ENCODE measurements at regions of chr19 and their contacts with region 1.

Region 1: GRCh38 chr19:16041299-16041990 is 34.9 kb upstream of the TPM4 start:
- DNase-seq: peak; percentile 81
- ATAC-seq: peak; percentile 86
- H3K4me3 Mint-ChIP-seq: no peak overlapping the region
- H3K27ac Mint-ChIP-seq: no peak overlapping the region
- H3K4me1 Mint-ChIP-seq: peaks cover 17% of the 10 kb centered on the region
- H3K27me3 Mint-ChIP-seq: peaks cover 11% of the 10 kb centered on the region

Region 2: DNA sequence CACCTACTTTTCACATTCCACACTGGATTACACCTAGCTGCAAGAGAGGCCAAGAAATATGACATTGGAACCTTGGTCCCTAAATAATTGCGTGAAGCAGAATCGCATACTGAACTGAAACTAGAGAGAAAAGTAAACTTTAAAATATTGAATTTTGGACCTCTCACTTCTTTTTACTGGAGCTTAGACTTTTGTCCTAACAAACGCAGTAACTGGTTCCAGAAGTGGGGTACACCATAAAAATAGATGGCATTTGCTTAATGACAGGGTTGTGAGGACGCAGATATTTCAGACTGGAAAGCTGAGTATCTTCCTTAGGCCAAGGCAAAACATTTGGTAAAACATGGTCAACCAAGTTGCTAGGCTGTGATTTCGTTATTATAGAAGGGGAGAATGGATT is 15.6 kb after region 1 on chr19:
- CTCF ChIA-PET with region 1: interaction called, 83 read pairs
- DNase-seq: no peak
- ATAC-seq: no peak
- H3K4me3 Mint-ChIP-seq: no peak overlapping the region
- H3K27ac Mint-ChIP-seq: no peak overlapping the region
- H3K4me1 Mint-ChIP-seq: peaks cover 12% of the 10 kb centered on the region
- H3K27me3 Mint-ChIP-seq: peaks cover 23% of the 10 kb centered on the region

Region 3: DNA sequence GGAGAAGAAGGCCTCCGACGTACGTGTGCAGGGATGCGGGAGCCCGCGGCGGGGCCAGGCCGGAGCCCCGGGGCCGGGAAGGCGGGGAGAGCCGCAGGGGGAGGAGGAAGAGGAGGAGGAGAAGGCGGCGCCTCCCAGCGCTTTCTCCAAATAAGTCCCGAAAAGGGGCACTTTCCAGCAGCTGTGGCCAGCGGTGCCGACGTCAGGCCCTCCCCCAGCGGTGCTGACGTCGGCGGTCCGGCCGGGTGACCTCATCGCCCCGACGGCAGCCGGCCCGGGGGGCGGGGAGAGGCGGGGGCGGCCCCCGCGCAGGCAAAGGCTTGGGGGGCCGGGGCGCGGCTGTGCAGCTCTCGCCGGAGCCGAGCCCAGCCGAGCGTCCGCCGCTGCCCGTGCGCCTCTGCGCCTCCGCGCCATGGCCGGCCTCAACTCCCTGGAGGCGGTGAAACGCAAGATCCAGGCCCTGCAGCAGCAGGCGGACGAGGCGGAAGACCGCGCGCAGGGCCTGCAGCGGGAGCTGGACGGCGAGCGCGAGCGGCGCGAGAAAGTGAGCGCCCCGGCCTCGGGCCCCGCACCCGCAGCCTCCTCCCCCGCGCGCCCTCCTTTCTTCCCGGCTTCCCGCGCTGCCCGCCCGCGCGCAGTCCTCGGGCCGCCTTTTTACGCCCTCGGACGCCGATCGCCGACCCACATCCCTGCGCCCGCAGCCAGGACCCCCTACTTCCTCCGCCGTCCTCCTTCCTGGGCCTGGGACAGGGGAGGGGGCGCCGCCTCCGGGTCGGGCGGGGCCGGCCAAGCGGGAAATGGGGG is 34.9 kb after region 1 on chr19 and contains the start of gene TPM4:
- CTCF ChIA-PET with region 1: interaction called, 14 read pairs
- DNase-seq: peak; percentile 96
- ATAC-seq: peak; percentile 65
- H3K4me3 Mint-ChIP-seq: peak within 1 kb of the TSS; percentile 80
- H3K27ac Mint-ChIP-seq: peak within 1 kb of the TSS; percentile 98
- H3K4me1 Mint-ChIP-seq: peaks cover 69% of the 10 kb centered on the region
- H3K27me3 Mint-ChIP-seq: no peaks in the 10 kb centered on the region
- total RNA-seq, gene TPM4: 491 to 493 TPM

Region 4: GRCh38 chr19:16088351-16089009 is 47.0 kb after region 1 on chr19:
- CTCF ChIA-PET with region 1: interaction called, 27 read pairs
- DNase-seq: no peak
- ATAC-seq: no peak
- H3K4me3 Mint-ChIP-seq: no peak overlapping the region
- H3K27ac Mint-ChIP-seq: peak overlapping the region; percentile 56
- H3K4me1 Mint-ChIP-seq: peaks cover 64% of the 10 kb centered on the region
- H3K27me3 Mint-ChIP-seq: no peaks in the 10 kb centered on the region

Region 5: DNA sequence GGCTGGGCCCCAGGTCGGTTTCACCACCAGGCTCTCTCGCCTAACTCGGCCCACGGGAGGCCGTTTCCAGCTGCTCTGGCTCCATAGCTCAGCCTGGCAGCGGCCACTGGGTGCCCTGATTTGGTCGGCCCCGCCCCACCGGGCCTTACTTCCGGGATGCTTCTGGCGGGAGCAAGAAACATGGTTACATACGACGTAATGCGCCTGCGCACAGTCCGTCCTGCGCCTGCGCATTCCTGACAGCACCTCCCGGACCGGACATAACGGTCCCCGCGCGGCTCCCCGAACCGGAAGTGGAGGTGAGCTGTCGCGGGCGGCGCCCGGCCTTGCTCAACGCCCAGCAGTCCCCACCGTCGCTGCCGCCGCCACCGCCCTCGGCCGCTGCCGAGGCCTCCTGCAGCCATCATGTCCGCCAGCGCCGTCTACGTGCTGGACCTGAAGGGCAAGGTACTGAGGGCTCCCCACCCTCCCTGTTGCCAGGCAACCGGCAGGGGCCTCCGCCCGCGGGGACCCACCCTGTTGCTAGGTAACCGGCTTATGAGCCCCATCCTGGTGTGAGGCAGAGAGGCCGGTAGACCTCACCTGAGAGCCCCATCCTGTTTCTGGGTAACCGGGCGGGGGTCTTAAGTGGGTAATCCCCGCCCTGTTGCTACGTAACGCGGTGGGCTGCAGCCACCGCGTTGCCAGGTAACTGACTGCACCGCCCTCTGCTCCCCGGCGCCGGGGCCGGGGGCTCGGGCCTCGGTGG is 156.4 kb after region 1 on chr19 and contains the start of gene AP1M1:
- CTCF ChIA-PET with region 1: interaction called, 16 read pairs
- DNase-seq: peak; percentile 99
- ATAC-seq: peak; percentile 94
- H3K4me3 Mint-ChIP-seq: peak within 1 kb of the TSS; percentile 79
- H3K27ac Mint-ChIP-seq: peak within 1 kb of the TSS; percentile 88
- H3K4me1 Mint-ChIP-seq: peaks cover 49% of the 10 kb centered on the region
- H3K27me3 Mint-ChIP-seq: no peaks in the 10 kb centered on the region
- total RNA-seq, gene AP1M1: 144 to 154 TPM